ENCODE measurements at regions of chr18 and their contacts with region 1.

Region 1: GRCh38 chr18:37537868-37538525 is 27.6 kb downstream of the CELF4 start:
- DNase-seq: no peak
- ATAC-seq: peak; percentile 95
- H3K4me3 ChIP-seq: no peak overlapping the region
- H3K27ac ChIP-seq: no peak overlapping the region
- H3K4me1 ChIP-seq: no peaks in the 10 kb centered on the region; the same call in 1 of the 2 replicates
- H3K27me3 ChIP-seq: peaks cover 4 to 6% of the 10 kb centered on the region in 2 experiments
- CTCF ChIP-seq: peak; percentile 77 to 87 (median 84)
- EP300 ChIP-seq: no peak
- POLR2A ChIP-seq: no peak
- RAD21 ChIP-seq: peak; percentile 66

Region 2: GRCh38 chr18:37341016-37341415 is 197.0 kb before region 1 on chr18:
- CTCF ChIA-PET with region 1: no interaction called
- POLR2A ChIA-PET with region 1: no interaction called
- RAD21 ChIA-PET with region 1: interaction called, 3 read pairs
- SMC1A ChIA-PET with region 1: no interaction called
- in situ Hi-C with region 1: no loop called
- intact Hi-C with region 1: loop called (anchors 2 kb)
- DNase-seq: no peak
- ATAC-seq: no peak
- H3K4me3 ChIP-seq: no peak overlapping the region
- H3K27ac ChIP-seq: no peak overlapping the region
- H3K4me1 ChIP-seq: no peaks in the 10 kb centered on the region
- H3K27me3 ChIP-seq: peaks cover 2 to 5% of the 10 kb centered on the region in 2 experiments; a peak in 3 of 4 replicates
- CTCF ChIP-seq: no peak
- EP300 ChIP-seq: no peak
- POLR2A ChIP-seq: no peak
- RAD21 ChIP-seq: no peak

Region 3: DNA sequence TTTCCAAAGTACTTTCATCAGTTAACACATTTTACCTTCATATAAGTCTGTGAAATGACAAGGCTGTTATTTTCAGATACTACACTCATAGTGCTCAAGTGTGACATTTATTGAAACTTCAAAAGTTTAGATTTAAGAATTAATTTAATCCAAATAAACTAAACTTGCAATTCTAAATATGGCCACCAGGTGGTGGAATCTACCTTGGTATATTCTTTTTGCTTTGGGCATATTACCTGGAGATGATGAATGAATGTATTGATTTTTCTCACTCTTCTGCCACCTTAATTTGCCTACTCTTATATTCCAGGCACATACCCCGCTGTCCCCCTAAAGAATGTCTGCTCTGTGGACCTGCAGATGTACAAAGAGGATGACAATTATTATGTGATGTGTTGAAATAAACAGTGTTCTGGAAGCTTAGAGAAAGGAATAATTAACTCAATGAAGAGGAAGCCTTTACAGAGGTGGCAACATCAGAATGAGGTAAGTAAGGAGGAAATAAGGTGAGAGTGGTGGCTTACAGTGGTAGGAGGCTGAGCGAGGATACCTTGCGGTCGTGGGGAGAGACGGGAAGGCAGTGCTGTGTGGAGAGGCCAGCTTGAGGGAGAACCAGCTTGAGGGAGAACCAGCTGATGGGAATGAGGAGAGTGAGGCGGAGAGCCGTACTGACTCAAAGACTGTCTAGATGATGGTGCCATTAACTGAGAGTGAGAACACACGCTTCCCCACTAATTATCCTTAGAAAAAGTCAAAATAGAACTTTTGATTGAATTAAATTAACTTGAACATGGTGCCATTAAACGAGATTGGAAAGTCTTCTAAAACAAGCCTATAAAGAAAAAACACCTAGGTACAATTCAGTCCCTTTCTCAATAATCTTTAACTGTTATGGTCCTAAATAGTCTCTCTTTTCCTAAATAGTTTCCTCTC is 151.9 kb before region 1 on chr18:
- CTCF ChIA-PET with region 1: interaction called, 5 read pairs
- POLR2A ChIA-PET with region 1: no interaction called
- RAD21 ChIA-PET with region 1: interaction called, 4 read pairs
- SMC1A ChIA-PET with region 1: no interaction called
- in situ Hi-C with region 1: no loop called
- intact Hi-C with region 1: loop called (anchors 1 kb)
- DNase-seq: no peak
- ATAC-seq: peak; percentile 27; the same call in 1 of the 3 replicates
- H3K4me3 ChIP-seq: no peak overlapping the region
- H3K27ac ChIP-seq: no peak overlapping the region
- H3K4me1 ChIP-seq: no peaks in the 10 kb centered on the region
- H3K27me3 ChIP-seq: no peaks in the 10 kb centered on the region; a peak in 3 of 4 replicates
- CTCF ChIP-seq: peak; percentile 49 to 64 (median 53)
- EP300 ChIP-seq: no peak
- POLR2A ChIP-seq: no peak
- RAD21 ChIP-seq: peak; percentile 75

Region 4: GRCh38 chr18:37443325-37444055 is 94.5 kb before region 1 on chr18:
- CTCF ChIA-PET with region 1: interaction called, 3 read pairs
- POLR2A ChIA-PET with region 1: no interaction called
- RAD21 ChIA-PET with region 1: no interaction called
- SMC1A ChIA-PET with region 1: no interaction called
- in situ Hi-C with region 1: no loop called
- intact Hi-C with region 1: loop called (anchors 1 kb)
- DNase-seq: no peak
- ATAC-seq: no peak
- H3K4me3 ChIP-seq: no peak overlapping the region
- H3K27ac ChIP-seq: no peak overlapping the region
- H3K4me1 ChIP-seq: no peaks in the 10 kb centered on the region; the same call in 1 of the 2 replicates
- H3K27me3 ChIP-seq: no peaks in the 10 kb centered on the region
- CTCF ChIP-seq: no peak
- EP300 ChIP-seq: no peak
- POLR2A ChIP-seq: no peak
- RAD21 ChIP-seq: no peak